Activated CD4-positive, alpha-beta T cell treated with anti-CD3 and anti-CD28 coated beads, Interleukin-2, amount 10 ng/mL, durations not matched to agents 7 days and 5 days (primary cell): ENCODE measurements at regions of chr18 and their contacts with region 1.

Region 1: DNA sequence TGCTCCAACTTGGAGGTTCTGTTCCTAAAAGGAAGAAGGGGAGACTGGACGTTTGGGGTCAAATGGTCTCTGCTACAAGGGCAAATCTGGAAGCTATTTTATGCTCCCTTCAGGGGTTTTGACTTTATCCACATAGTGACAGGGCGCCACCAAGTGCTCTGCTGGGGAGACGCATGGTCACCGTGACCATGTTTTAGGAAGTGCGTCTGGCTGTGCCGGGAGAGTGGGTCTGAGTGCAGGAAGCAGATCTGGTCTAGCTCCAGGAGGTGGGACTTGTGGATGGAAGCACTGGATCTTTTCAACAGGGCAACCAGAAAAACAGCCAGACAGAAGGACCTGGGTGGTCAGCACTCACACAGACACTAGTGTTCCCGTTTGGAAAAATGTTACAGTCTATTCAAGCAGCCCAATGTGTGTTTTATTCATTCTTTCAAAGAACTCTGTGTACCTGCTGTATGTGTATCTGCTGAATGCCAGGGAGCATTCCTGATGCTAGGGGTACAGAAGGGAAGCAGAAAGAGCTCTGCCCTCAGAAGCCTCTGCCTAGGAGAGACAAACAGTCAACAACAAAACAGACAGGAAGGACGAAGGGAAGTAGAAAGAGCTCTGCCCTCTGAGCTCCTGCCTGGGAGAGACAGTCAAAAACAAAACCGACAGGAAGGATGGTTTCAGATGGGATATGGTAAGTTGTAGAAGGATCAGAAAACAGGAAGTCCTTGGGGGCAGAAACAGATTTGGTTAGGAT is 14.3 kb downstream of the IMPA2 start:
- DNase-seq: peak; percentile 63
- H3K4me3 Mint-ChIP-seq: peak overlapping the region; percentile 35
- H3K27ac Mint-ChIP-seq: peak overlapping the region; percentile 83
- H3K4me1 Mint-ChIP-seq: peaks cover 23% of the 10 kb centered on the region
- H3K27me3 Mint-ChIP-seq: no peaks in the 10 kb centered on the region

Region 2: GRCh38 chr18:11981633-11982366 is 13.8 kb before region 1 on chr18:
- CTCF ChIA-PET with region 1: interaction called, 13 read pairs
- POLR2A ChIA-PET with region 1: interaction called, 9 read pairs
- DNase-seq: peak; percentile 22
- H3K4me3 Mint-ChIP-seq: peak overlapping the region; percentile 86
- H3K27ac Mint-ChIP-seq: peak overlapping the region; percentile 80
- H3K4me1 Mint-ChIP-seq: peaks cover 20% of the 10 kb centered on the region
- H3K27me3 Mint-ChIP-seq: peaks cover 6% of the 10 kb centered on the region

Region 3: DNA sequence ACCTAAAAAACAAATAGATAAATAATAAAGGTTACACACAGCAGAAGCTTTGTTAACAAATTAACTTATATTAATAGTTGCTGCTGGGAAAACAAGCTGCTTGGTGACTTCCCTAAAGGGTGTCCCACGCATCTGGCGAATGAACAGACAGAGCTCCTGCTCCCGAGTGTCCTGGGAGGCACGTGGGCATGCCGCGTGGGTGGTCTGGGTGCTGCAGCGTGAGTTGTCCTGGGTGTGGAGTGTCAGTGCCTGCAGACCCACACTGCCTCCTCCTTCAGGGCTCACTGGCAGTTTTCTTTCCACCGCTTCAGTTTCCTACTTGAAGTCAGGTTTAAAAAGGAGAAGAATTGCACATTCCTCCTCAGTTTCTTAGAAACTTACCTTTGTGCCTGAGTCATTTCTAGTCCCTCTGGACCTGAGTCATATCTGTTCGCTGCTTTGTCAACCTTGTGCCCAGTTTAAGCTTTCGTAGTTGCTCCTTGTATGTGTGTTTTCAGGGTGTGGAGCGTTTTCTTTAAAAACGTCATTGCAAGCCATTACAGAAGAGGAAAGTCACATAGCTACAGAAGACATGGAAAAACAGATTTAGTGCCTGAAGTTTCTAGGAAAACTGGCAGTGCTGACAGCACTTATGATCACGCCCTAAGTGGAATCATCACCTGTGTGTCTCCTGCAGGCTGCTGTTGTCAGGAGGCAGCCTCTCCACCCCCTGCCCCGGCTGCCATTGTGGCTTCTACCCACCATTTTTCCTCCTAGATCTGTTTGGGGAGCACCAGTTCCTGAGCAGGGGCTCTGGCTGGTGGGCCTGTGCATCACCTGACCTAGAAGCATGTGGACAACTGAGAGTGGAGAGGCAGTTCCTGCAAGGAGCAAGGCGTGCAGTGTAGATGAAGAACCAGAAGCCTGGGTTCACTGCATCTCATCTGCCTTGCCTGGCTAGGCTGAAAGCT is 10.2 kb after region 1 on chr18:
- CTCF ChIA-PET with region 1: interaction called, 13 read pairs
- POLR2A ChIA-PET with region 1: no interaction called
- DNase-seq: no peak
- H3K4me3 Mint-ChIP-seq: no peak overlapping the region
- H3K27ac Mint-ChIP-seq: no peak overlapping the region
- H3K4me1 Mint-ChIP-seq: peaks cover 3% of the 10 kb centered on the region
- H3K27me3 Mint-ChIP-seq: no peaks in the 10 kb centered on the region